Common myeloid progenitor, CD34-positive (primary cell): ENCODE measurements at regions of chr7 and their contacts with region 1.

Region 1: DNA sequence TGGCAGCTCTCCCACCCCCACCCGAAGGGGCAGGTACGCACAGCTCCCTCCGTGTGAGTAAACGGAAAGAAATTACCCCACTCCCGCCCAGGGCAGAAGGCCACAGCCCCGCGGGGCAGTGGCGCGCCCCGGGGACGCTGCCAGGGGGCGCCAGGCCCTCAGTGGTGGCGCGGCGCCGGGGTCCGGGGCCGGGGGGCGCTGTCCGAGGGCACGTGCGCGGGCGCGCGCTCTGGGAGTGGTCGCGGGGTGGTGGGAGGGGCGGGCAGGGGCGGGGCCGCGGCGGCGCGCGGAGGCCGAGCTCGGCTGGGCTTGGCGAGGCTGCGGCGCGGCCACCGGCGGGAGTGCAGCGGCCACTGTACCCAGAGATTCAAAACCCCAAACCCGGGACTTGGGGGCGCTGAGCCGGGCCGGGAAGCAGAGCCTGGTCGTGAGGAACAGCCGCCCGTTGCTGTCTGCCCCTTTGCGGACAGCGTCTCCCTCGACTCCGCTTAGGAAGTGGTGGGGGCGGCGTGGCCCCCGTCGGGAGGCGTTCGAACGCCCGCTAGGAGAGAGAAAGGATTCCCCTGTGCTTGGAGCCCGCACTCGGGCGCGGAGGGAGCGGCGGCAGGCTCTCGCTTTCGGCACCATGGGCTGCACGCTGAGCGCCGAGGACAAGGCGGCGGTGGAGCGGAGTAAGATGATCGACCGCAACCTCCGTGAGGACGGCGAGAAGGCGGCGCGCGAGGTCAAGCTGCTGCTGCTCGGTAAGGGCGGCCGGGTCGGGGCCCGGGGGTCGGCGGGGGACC is at the start of gene GNAI1:
- DNase-seq: peak; percentile 85 to 91 (median 91)
- H3K4me3 ChIP-seq: peak within 1 kb of the TSS; percentile 78 to 98 (median 97)
- H3K27ac ChIP-seq: peak within 1 kb of the TSS; percentile 59 to 76
- H3K4me1 ChIP-seq: peaks cover 21 to 61% (median 46%) of the 10 kb centered on the region in 4 experiments
- H3K27me3 ChIP-seq: no peaks in the 10 kb centered on the region

Region 2: DNA sequence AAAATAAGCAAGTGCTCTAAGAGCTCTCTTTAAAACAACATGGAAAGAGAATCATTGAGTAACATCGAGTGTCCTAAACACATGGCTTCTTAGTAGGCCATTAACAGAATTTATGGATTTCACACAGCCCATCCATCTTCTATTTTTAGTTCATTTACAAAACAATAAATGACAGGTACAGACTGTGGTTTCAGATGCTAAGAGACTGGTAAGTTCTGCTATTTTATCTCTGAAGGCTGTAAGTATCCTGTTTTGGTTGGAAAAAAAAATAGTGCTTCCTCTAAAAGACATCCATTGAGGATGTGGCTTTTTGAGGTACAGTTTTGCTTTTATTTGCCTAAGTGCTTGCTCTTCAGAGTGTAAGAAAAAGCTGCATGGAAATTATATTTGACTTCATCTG is 27.4 kb before region 1 on chr7:
- CTCF ChIA-PET with region 1: interaction called, 136 read pairs
- POLR2A ChIA-PET with region 1: interaction called, 7 read pairs
- DNase-seq: peak; percentile 81 to 97 (median 92)
- H3K4me3 ChIP-seq: peak overlapping the region in 1 of 7 experiments; percentile 28
- H3K27ac ChIP-seq: peak overlapping the region; percentile 35 to 74
- H3K4me1 ChIP-seq: peaks cover 26 to 56% (median 39%) of the 10 kb centered on the region in 4 experiments
- H3K27me3 ChIP-seq: no peaks in the 10 kb centered on the region

Region 3: DNA sequence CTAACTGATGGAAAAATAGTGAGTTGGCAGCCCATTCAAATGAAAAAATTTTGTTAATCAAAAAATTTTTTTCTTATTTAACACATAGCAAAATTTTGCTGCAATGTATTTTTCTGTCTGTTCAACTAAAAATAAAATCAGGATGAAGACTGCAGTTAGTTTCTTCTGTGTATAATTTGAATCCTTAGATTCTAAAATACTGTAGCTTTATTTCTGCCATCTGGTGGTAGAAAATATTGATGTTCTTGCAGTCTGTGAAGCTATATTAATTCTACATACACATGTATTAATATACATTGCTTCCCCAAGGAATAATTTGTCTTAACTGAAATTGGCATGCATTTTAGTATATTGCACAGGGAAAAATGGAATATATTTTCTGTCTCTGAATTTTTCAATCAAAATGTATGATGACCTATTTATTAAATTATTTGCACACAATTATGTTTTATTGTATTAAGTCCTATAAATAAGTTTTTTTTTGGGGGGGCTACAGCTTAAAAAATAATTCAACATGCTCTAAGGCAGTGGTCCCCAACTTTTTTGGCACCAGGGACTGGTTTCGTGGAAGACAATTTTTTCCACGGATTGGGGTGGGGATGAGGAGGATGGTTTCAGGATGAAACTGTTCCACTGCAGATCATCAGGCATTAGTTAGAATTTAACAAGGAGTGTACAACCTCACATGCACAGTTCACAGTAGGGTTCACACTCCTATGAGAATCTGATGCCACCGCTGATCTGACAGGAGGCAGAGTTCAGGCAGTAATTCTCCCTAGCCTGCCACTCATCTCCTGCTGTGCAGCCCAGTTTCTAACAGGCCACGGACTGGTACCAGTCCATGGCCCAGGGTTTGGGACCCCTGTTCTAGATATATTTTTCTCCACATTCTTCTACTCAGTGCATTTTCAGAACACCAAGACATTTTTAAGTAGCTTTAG is 257.8 kb after region 1 on chr7:
- CTCF ChIA-PET with region 1: interaction called, 37 read pairs
- POLR2A ChIA-PET with region 1: no interaction called
- DNase-seq: peak; percentile 45 to 68 (median 64)
- H3K4me3 ChIP-seq: no peak overlapping the region
- H3K27ac ChIP-seq: no peak overlapping the region
- H3K4me1 ChIP-seq: no peaks in the 10 kb centered on the region
- H3K27me3 ChIP-seq: no peaks in the 10 kb centered on the region